H1 (cell line): ENCODE measurements at regions of chr16 and their contacts with region 1.

Region 1: DNA sequence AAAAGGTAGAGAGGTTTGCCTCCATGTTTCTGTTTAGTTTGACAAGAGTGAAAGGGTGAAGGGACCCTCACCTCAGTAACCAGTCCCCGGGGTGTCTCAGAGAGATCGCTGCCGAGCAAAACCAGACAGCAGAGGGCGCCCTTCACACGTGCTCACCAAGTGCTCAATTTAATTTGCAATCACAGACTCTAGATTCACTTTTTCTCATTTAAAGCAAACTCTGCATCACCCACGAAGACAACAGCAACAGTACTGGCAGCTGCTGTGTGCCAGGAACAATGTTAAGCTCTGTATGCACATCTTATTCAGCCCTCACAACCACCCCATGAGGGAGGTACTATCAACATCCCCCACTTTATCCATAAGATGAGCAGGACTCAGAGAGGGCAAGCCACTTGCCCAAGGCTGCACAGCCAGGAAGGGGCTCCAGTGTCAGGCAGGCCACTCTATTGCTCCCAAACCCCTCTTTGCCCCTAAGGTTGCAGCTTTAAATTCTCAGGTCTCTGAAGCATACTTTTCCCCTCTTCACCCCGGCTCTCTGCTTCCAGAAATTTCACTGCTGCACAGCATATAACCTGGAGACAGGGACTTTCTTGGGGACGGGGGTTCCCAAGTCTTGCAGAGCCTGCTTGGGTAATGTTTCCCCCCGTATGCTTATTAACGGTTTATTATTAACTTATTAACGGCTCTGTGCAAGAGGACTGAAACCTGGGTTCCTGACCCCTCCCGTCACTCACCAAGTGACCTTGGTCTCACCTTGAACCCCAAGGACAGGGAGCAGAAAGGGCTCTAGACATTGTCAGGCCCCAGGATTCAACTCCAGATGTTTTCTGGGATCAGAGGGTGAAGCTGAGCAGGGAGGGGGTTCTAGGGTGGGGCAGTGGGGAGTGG is 70.9 kb downstream of the CNGB1 start:
- DNase-seq: peak in 1 of 2 experiments; percentile 89
- H3K4me3 ChIP-seq: no peak overlapping the region
- H3K27ac ChIP-seq: no peak overlapping the region
- H3K4me1 ChIP-seq: no peaks in the 10 kb centered on the region; a peak in 2 of 7 replicates
- H3K27me3 ChIP-seq: no peaks in the 10 kb centered on the region
- CTCF ChIP-seq: peak; percentile 86 to 93 (median 88)
- EP300 ChIP-seq: no peak
- POLR2A ChIP-seq: no peak
- RAD21 ChIP-seq: peak; percentile 91 to 96

Region 2: GRCh38 chr16:57775661-57776469 is 124.2 kb before region 1 on chr16:
- CTCF ChIA-PET with region 1: interaction called, 36 read pairs
- POLR2A ChIA-PET with region 1: no interaction called
- DNase-seq: peak; percentile 84 to 94
- H3K4me3 ChIP-seq: peak overlapping the region in 1 of 4 experiments; percentile 16; a peak in 3 of 8 replicates
- H3K27ac ChIP-seq: no peak overlapping the region
- H3K4me1 ChIP-seq: peaks cover 6 to 19% (median 17%) of the 10 kb centered on the region in 4 experiments
- H3K27me3 ChIP-seq: peaks cover 0 to 4% (median 1%) of the 10 kb centered on the region in 4 experiments; a peak in 3 of 7 replicates
- CTCF ChIP-seq: peak; percentile 74 to 99 (median 91)
- EP300 ChIP-seq: peak in 1 of 2 experiments; percentile 53; a peak in 1 of 3 replicates
- POLR2A ChIP-seq: no peak
- RAD21 ChIP-seq: peak; percentile 89 to 91

Region 3: DNA sequence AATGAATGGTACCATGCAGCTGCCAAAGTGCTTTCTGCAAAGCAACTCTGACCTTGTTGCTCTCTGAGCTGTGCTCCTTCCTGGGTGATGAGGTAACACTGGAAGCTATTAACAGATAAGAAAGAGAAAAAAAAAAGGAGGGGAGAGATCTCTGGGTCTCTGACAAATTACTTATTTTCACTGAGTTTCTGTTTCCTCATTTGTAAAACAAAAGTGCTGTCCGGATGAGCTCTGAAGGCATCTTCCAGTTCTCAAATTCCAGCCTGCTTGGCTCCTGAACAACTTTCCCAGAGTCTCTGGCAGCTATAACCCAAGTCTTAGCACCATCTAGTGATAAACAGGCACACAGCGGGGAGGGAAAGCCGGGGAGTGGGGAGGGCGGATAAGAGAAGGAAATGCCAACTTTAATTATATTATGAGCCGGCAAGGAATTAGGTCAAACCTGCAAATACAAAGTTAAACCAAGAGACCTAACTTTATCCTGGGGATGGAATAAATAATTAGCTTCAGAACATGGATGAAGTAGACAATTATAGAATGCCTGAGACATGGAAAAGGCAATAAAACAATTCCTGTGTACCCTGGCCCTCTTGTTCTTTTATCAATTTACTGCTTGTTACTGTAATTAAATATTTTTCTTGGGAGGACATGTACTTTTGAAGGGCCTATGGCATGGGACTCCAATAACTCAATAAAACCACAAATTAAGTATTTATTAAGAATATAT is 36.4 kb before region 1 on chr16:
- CTCF ChIA-PET with region 1: interaction called, 18 read pairs
- POLR2A ChIA-PET with region 1: no interaction called
- DNase-seq: peak in 1 of 2 experiments; percentile 49
- H3K4me3 ChIP-seq: 0 out of 8 replicates have a peak overlapping the region, but pooled peaks of 1 of the 4 experiments have one; percentile 13
- H3K27ac ChIP-seq: no peak overlapping the region
- H3K4me1 ChIP-seq: peaks cover 5 to 14% (median 8%) of the 10 kb centered on the region in 4 experiments
- H3K27me3 ChIP-seq: no peaks in the 10 kb centered on the region
- CTCF ChIP-seq: peak; percentile 33 to 65 (median 49)
- EP300 ChIP-seq: no peak
- POLR2A ChIP-seq: no peak
- RAD21 ChIP-seq: peak; percentile 70 to 80

Region 4: DNA sequence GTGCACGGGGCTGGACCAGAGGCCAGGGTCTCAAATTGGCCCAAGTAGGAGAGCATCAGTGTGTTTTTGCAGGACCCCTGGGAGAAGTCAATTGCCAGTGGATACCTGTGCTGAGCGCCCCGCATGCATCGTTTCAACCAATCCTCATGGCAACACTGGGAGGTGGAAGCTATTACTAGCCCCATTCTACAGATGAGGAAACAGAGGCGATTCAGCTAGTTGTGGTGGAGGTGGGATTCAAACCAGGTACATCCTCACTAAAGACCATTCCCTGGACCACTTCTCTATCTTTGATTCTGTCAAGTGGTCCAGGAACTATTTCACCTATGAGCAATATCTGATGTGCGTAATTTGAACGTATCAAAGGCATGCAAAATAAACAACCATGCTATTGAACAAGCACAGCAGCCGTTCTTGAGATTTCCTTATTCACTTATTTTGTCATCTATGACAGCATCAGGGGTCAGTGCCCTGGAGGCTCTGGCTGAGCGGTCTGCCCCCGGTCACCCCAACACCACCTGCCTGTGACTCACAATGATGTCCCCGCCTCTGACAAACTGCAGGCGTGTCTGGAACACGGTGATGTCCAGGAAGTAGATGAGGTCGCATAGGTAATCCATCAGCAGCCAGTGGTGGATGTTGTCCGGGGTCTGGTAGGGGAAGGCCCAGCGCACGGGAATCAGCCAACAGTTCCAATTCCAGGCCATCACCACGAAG is 16.9 kb after region 1 on chr16:
- CTCF ChIA-PET with region 1: interaction called, 25 read pairs
- POLR2A ChIA-PET with region 1: no interaction called
- DNase-seq: no peak
- H3K4me3 ChIP-seq: no peak overlapping the region
- H3K27ac ChIP-seq: no peak overlapping the region
- H3K4me1 ChIP-seq: peaks cover 0 to 10% (median under 1%) of the 10 kb centered on the region in 4 experiments; a peak in 4 of 7 replicates
- H3K27me3 ChIP-seq: no peaks in the 10 kb centered on the region
- CTCF ChIP-seq: no peak
- EP300 ChIP-seq: no peak
- POLR2A ChIP-seq: no peak
- RAD21 ChIP-seq: no peak

Region 5: DNA sequence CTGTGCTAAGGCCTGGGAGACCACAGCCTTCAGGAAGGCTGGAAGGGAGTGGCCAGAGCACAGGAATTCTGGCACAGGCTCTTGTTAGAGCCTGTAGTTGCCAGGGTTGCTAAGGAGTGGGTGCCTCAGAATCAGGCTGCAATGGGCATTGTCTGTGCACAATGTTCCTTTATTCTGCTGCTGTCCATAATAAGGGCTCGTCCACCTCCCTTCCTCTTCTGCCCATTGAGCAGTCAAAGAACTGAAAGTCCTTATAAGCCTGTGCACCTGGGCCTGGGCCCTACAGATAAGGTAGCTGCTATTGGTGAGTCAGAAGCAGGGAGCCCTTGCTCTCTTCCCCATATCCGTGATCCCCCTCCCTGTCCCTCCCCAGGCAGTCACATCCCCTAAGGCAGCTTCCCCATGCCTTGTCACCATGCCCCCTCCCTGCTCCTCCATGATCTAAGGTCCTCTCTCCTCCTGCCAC is 76.3 kb after region 1 on chr16:
- CTCF ChIA-PET with region 1: interaction called, 63 read pairs
- POLR2A ChIA-PET with region 1: no interaction called
- DNase-seq: no peak
- H3K4me3 ChIP-seq: no peak overlapping the region
- H3K27ac ChIP-seq: no peak overlapping the region
- H3K4me1 ChIP-seq: no peaks in the 10 kb centered on the region; a peak in 1 of 7 replicates
- H3K27me3 ChIP-seq: no peaks in the 10 kb centered on the region
- CTCF ChIP-seq: no peak
- EP300 ChIP-seq: no peak
- POLR2A ChIP-seq: no peak
- RAD21 ChIP-seq: no peak